ENCODE measurements at regions of chr15 and their contacts with region 1.

Region 1: GRCh38 chr15:81410318-81410753 is 36.3 kb upstream of the TMC3 start:
- DNase-seq: peak; percentile 60 to 62
- H3K4me3 ChIP-seq: no peak overlapping the region
- H3K27ac ChIP-seq: no peak overlapping the region
- H3K4me1 ChIP-seq: peaks cover 0 to 3% (median 0%) of the 10 kb centered on the region in 4 experiments; a peak in 1 of 7 replicates
- H3K27me3 ChIP-seq: no peaks in the 10 kb centered on the region
- CTCF ChIP-seq: peak in 2 of 3 experiments; percentile 61 to 73; a peak in 3 of 4 replicates
- EP300 ChIP-seq: no peak
- POLR2A ChIP-seq: no peak
- RAD21 ChIP-seq: peak; percentile 87 to 94

Region 2: DNA sequence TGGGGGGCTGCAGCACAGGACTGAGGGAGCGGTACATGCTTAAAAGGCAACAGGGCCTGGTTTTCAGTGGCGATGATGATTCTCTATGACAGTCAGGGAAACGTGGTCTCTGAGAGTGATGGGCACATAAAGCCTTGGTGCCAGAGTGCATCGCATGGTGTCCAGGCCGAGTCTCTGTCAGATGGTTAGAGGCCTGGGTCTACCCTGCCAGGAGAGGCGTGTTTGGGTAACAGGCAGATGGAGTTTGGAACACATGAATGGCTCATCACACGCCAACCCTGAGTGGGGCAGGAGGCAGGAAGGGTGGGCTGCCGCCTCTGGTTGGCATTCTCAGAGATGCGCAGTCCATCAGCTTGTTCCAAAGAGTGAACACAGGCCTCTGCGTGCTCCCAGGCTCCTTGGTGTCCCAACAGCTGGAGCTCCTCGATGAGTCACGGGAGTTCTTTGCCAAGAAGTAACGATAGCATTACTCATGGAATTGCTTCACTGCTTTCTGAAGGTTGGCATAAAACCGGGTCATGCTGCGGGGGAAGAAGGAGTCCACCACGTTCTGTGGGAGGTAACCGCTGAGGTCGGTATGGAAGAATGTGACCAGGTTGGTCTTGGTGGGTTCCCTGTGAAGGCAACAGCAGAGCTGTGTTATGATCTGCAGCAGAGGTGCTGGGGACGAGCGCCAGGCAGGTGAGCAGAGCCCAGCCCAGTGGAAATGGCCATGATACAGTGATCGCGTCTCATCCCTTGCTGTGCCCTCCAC is 97.4 kb before region 1 on chr15:
- CTCF ChIA-PET with region 1: no interaction called
- POLR2A ChIA-PET with region 1: no interaction called
- DNase-seq: no peak
- H3K4me3 ChIP-seq: no peak overlapping the region
- H3K27ac ChIP-seq: no peak overlapping the region
- H3K4me1 ChIP-seq: no peaks in the 10 kb centered on the region
- H3K27me3 ChIP-seq: no peaks in the 10 kb centered on the region
- CTCF ChIP-seq: no peak
- EP300 ChIP-seq: no peak
- POLR2A ChIP-seq: no peak
- RAD21 ChIP-seq: no peak

Region 3: GRCh38 chr15:81394603-81395002 is 15.7 kb before region 1 on chr15:
- CTCF ChIA-PET with region 1: interaction called, 26 read pairs
- POLR2A ChIA-PET with region 1: no interaction called
- DNase-seq: no peak
- H3K4me3 ChIP-seq: no peak overlapping the region
- H3K27ac ChIP-seq: no peak overlapping the region
- H3K4me1 ChIP-seq: no peaks in the 10 kb centered on the region
- H3K27me3 ChIP-seq: no peaks in the 10 kb centered on the region
- CTCF ChIP-seq: no peak
- EP300 ChIP-seq: no peak
- POLR2A ChIP-seq: no peak
- RAD21 ChIP-seq: no peak

Region 4: GRCh38 chr15:81427176-81427575 is 16.8 kb after region 1 on chr15:
- CTCF ChIA-PET with region 1: interaction called, 11 read pairs
- POLR2A ChIA-PET with region 1: no interaction called
- DNase-seq: no peak
- H3K4me3 ChIP-seq: no peak overlapping the region
- H3K27ac ChIP-seq: no peak overlapping the region
- H3K4me1 ChIP-seq: no peaks in the 10 kb centered on the region
- H3K27me3 ChIP-seq: peaks cover 0 to 1% (median 0%) of the 10 kb centered on the region in 4 experiments; a peak in 1 of 7 replicates
- CTCF ChIP-seq: no peak
- EP300 ChIP-seq: no peak
- POLR2A ChIP-seq: no peak
- RAD21 ChIP-seq: no peak

Region 5: DNA sequence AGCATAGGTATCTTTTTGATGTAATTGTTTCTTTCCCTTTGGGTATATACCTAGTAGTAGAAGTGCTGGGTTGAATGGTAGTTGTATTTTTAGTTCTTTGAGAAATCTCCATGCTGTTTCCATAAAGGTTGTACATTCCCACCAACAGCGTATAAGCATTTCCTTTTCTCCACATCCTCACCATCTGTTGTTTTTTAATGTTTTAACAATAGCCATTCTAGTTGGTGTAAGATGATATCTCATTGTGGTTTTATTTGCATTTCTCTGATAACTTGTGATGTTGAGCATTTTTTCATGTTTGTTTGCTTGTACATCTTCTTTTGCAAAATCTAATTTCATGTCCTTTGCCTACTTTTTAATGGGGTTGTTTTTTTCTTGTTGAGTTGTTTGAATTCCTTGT is 43.7 kb after region 1 on chr15:
- CTCF ChIA-PET with region 1: interaction called, 12 read pairs
- POLR2A ChIA-PET with region 1: no interaction called
- DNase-seq: no peak
- H3K4me3 ChIP-seq: no peak overlapping the region
- H3K27ac ChIP-seq: no peak overlapping the region
- H3K4me1 ChIP-seq: no peaks in the 10 kb centered on the region
- H3K27me3 ChIP-seq: no peaks in the 10 kb centered on the region
- CTCF ChIP-seq: no peak
- EP300 ChIP-seq: no peak
- POLR2A ChIP-seq: no peak
- RAD21 ChIP-seq: no peak

Region 6: GRCh38 chr15:81469154-81469553 is 58.8 kb after region 1 on chr15:
- CTCF ChIA-PET with region 1: interaction called, 27 read pairs
- POLR2A ChIA-PET with region 1: no interaction called
- DNase-seq: no peak
- H3K4me3 ChIP-seq: no peak overlapping the region
- H3K27ac ChIP-seq: no peak overlapping the region
- H3K4me1 ChIP-seq: no peaks in the 10 kb centered on the region
- H3K27me3 ChIP-seq: no peaks in the 10 kb centered on the region
- CTCF ChIP-seq: no peak
- EP300 ChIP-seq: no peak
- POLR2A ChIP-seq: no peak
- RAD21 ChIP-seq: no peak

Region 7: DNA sequence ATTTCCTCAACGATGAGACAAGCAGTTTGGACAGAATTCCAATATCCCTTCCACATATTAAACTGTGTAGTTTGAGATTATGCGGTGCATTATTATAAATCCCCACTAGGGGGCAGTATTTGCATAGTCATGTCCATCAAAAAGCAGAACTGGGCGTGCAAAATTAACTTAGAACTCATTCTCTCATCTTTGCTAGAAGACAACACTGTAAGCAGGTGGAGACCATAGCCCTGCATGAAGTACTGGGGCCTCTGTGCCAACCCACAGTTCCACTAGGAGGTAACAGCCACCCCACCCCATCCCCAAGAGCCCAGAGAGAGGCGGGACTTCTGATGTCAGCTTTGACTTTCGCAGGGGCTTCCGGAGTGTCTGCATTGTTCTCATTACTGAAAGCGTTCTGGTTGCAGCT is 70.3 kb after region 1 on chr15:
- CTCF ChIA-PET with region 1: interaction called, 25 read pairs
- POLR2A ChIA-PET with region 1: no interaction called
- DNase-seq: peak in 1 of 2 experiments; percentile 54
- H3K4me3 ChIP-seq: no peak overlapping the region
- H3K27ac ChIP-seq: no peak overlapping the region
- H3K4me1 ChIP-seq: peaks cover 0 to 3% (median 0%) of the 10 kb centered on the region in 4 experiments; a peak in 2 of 7 replicates
- H3K27me3 ChIP-seq: no peaks in the 10 kb centered on the region
- CTCF ChIP-seq: peak in 2 of 3 experiments; percentile 55 to 65; a peak in 2 of 4 replicates
- EP300 ChIP-seq: no peak
- POLR2A ChIP-seq: no peak
- RAD21 ChIP-seq: peak; percentile 85 to 89

Measured in H1 (cell line).